Naive thymus-derived CD4-positive, alpha-beta T cell (primary cell): ENCODE measurements at regions of chr9 and their contacts with region 1.

Region 1: DNA sequence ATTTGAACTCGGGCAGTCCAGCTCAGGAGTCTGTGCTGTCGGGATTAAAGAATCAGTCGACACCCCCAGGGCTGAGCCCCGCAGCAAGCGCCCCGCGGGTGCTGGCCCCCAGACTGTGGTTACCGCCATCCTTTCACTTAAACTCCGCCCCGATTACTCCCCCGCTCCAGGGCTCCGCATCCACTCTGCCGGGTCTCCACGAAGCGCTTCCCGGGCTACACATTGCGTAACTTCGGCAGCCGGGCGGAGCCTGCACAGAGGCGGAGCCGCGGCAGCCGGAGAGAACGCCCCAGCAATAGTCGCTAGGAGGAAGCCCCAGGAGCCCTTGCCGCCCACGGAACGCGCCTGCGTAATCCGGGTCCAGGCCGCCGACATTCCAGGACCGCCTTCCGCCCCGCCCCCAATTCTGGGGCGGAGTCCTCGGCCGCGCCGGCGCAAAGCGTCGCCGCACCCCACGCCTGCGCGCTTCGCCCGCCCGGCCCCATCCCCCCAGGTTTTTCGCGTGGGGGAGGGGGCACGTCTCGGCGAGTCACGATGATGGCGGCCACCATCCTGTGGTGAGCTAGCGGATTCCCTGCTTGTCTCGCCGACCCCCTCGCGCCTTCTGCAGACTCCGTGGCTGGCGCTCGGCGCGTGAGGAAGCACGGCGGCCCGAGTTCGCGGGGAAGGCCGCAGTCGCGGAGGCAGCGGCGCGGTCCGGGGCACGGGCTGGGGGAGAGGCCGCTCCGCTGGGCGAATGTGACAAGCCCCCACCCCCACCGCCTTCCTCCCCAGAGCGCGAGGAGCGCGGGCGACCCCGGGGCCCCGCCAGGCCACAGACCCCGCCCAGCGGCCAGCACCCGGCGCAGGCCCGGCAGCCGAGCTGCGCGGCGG is at the start of gene RAD23B:
- DNase-seq: peak; percentile 97 to 100 (median 99)
- ATAC-seq: peak; percentile 94
- H3K4me3 ChIP-seq: peak within 1 kb of the TSS; percentile 78
- H3K4me3 Mint-ChIP-seq: peak within 1 kb of the TSS; percentile 89 to 99 (median 96)
- H3K27ac ChIP-seq: peak within 1 kb of the TSS; percentile 92
- H3K27ac Mint-ChIP-seq: peak within 1 kb of the TSS; percentile 85 to 97 (median 95)
- H3K4me1 ChIP-seq: peaks cover 9 to 31% of the 10 kb centered on the region in 2 donors
- H3K4me1 Mint-ChIP-seq: peaks cover 28 to 52% (median 37%) of the 10 kb centered on the region in 7 donors
- H3K27me3 ChIP-seq: no peaks in the 10 kb centered on the region
- H3K27me3 Mint-ChIP-seq: peaks cover 0 to 9% (median 0%) of the 10 kb centered on the region in 5 donors
- total RNA-seq, gene RAD23B: 48.7 to 102 (median 55.6) TPM

Region 2: DNA sequence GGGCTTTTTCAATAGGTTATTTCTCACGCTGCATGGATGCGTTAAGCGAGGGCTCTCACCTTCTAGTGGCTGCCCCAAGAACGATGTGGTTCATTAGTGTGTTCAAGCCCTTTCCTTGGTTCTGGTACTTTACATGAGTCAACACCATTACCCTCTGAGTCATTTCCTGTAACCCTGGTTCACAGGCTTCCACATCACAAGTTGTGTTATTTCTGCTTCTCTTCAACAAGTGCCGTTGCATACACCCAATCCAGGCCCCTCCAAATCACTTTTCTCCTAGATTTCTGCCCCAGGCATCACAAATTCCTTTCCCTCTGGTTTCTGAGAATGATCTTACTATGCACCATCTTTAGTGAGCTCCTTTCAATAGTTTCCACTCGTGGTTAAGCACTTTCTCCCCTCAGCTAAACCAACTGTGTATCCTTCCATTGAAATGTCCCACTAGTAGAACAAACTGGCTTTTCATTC is 69.4 kb before region 1 on chr9:
- CTCF ChIA-PET with region 1: no interaction called
- POLR2A ChIA-PET with region 1: no interaction called
- intact Hi-C with region 1: no loop called
- DNase-seq: peak in 1 of 9 donors; percentile 23
- ATAC-seq: peak; percentile 87
- H3K4me3 ChIP-seq: no peak overlapping the region
- H3K4me3 Mint-ChIP-seq: peak overlapping the region in 1 of 10 donors; percentile 5
- H3K27ac ChIP-seq: no peak overlapping the region
- H3K27ac Mint-ChIP-seq: peak overlapping the region in 2 of 9 donors; percentile 25 to 30
- H3K4me1 ChIP-seq: no peaks in the 10 kb centered on the region
- H3K4me1 Mint-ChIP-seq: peaks cover 0 to 16% (median 6%) of the 10 kb centered on the region in 7 donors
- H3K27me3 ChIP-seq: no peaks in the 10 kb centered on the region
- H3K27me3 Mint-ChIP-seq: peaks cover 0 to 19% (median 3%) of the 10 kb centered on the region in 5 donors

Region 3: DNA sequence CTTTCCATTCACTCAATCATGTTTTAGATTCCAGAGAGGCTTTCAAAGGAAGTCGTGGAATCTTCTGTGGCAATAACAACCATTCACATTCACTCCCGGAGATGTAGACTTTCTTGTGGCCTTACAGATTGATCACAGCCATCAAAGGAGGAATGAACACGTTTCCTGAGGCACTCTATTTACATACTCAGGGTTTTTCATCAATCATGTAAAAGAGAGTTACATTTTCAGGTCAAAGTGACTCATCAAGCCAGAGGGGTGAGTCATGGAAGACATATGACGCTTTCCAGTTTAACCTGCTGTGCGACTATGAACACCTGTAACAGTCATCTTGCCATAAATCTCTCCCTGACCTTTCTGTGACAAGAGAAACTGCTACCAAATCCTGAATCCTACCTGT is 39.2 kb before region 1 on chr9:
- CTCF ChIA-PET with region 1: interaction called, 5 read pairs
- POLR2A ChIA-PET with region 1: no interaction called
- intact Hi-C with region 1: loop called (anchors 2 kb)
- DNase-seq: peak in 2 of 9 donors; percentile 8 to 28
- ATAC-seq: no peak
- H3K4me3 ChIP-seq: no peak overlapping the region
- H3K4me3 Mint-ChIP-seq: no peak overlapping the region
- H3K27ac ChIP-seq: no peak overlapping the region
- H3K27ac Mint-ChIP-seq: peak overlapping the region in 2 of 9 donors; percentile 2 to 43
- H3K4me1 ChIP-seq: no peaks in the 10 kb centered on the region
- H3K4me1 Mint-ChIP-seq: peaks cover 5 to 20% (median 12%) of the 10 kb centered on the region in 7 donors
- H3K27me3 ChIP-seq: no peaks in the 10 kb centered on the region
- H3K27me3 Mint-ChIP-seq: peaks cover 0 to 1% (median 0%) of the 10 kb centered on the region in 5 donors

Region 4: GRCh38 chr9:107269681-107270080 is 13.3 kb before region 1 on chr9:
- CTCF ChIA-PET with region 1: no interaction called
- POLR2A ChIA-PET with region 1: no interaction called
- intact Hi-C with region 1: no loop called
- DNase-seq: no peak
- ATAC-seq: no peak
- H3K4me3 ChIP-seq: no peak overlapping the region
- H3K4me3 Mint-ChIP-seq: no peak overlapping the region
- H3K27ac ChIP-seq: no peak overlapping the region
- H3K27ac Mint-ChIP-seq: no peak overlapping the region
- H3K4me1 ChIP-seq: no peaks in the 10 kb centered on the region
- H3K4me1 Mint-ChIP-seq: peaks cover 0 to 7% (median 0%) of the 10 kb centered on the region in 7 donors
- H3K27me3 ChIP-seq: no peaks in the 10 kb centered on the region
- H3K27me3 Mint-ChIP-seq: peaks cover 11 to 44% (median 29%) of the 10 kb centered on the region in 5 donors

Region 5: GRCh38 chr9:107309271-107309670 is 26.3 kb after region 1 on chr9:
- CTCF ChIA-PET with region 1: no interaction called
- POLR2A ChIA-PET with region 1: interaction called, 3 read pairs
- intact Hi-C with region 1: loop called (anchors 1 to 2 kb)
- DNase-seq: peak in 4 of 9 donors; percentile 3 to 29 (median 16)
- ATAC-seq: peak; percentile 77
- H3K4me3 ChIP-seq: no peak overlapping the region
- H3K4me3 Mint-ChIP-seq: peak overlapping the region in 8 of 10 donors; percentile 5 to 61 (median 33)
- H3K27ac ChIP-seq: no peak overlapping the region
- H3K27ac Mint-ChIP-seq: peak overlapping the region; percentile 9 to 83 (median 50)
- H3K4me1 ChIP-seq: peaks cover 12 to 15% of the 10 kb centered on the region in 2 donors
- H3K4me1 Mint-ChIP-seq: peaks cover 35 to 82% (median 66%) of the 10 kb centered on the region in 7 donors
- H3K27me3 ChIP-seq: no peaks in the 10 kb centered on the region
- H3K27me3 Mint-ChIP-seq: no peaks in the 10 kb centered on the region

Region 6: GRCh38 chr9:107323836-107324585 is 41.0 kb after region 1 on chr9:
- CTCF ChIA-PET with region 1: no interaction called
- POLR2A ChIA-PET with region 1: interaction called, 3 read pairs
- intact Hi-C with region 1: loop called in 1 of 2 experiments (anchors 1 kb)
- DNase-seq: no peak
- ATAC-seq: no peak
- H3K4me3 ChIP-seq: no peak overlapping the region
- H3K4me3 Mint-ChIP-seq: no peak overlapping the region
- H3K27ac ChIP-seq: no peak overlapping the region
- H3K27ac Mint-ChIP-seq: peak overlapping the region in 2 of 9 donors; percentile 11 to 17
- H3K4me1 ChIP-seq: no peaks in the 10 kb centered on the region
- H3K4me1 Mint-ChIP-seq: peaks cover 4 to 22% (median 13%) of the 10 kb centered on the region in 7 donors
- H3K27me3 ChIP-seq: no peaks in the 10 kb centered on the region
- H3K27me3 Mint-ChIP-seq: no peaks in the 10 kb centered on the region

Region 7: GRCh38 chr9:107489687-107490605 is 207.0 kb after region 1 on chr9 and contains the start of gene KLF4:
- CTCF ChIA-PET with region 1: no interaction called
- POLR2A ChIA-PET with region 1: no interaction called
- intact Hi-C with region 1: loop called in 1 of 2 experiments (anchors 2 kb)
- DNase-seq: peak in 7 of 9 donors; percentile 7 to 72 (median 23)
- ATAC-seq: peak; percentile 77
- H3K4me3 ChIP-seq: no peak within 1 kb of the TSS
- H3K4me3 Mint-ChIP-seq: peak within 1 kb of the TSS; percentile 59 to 85 (median 73)
- H3K27ac ChIP-seq: no peak within 1 kb of the TSS
- H3K27ac Mint-ChIP-seq: peak within 1 kb of the TSS in 1 of 9 donors; percentile 80
- H3K4me1 ChIP-seq: peaks cover 0 to 5% of the 10 kb centered on the region in 2 donors
- H3K4me1 Mint-ChIP-seq: peaks cover 5 to 28% (median 15%) of the 10 kb centered on the region in 7 donors
- H3K27me3 ChIP-seq: peaks cover 0 to 3% of the 10 kb centered on the region in 2 donors
- H3K27me3 Mint-ChIP-seq: peaks cover 56 to 71% (median 60%) of the 10 kb centered on the region in 5 donors
- total RNA-seq, gene KLF4: 0.29 to 266 (median 1.0) TPM